Activated B cell treated with CpG ODN at 0.5 μM for 24 hours (primary cell): ENCODE measurements at regions of chr3 and their contacts with region 1.

Region 1: GRCh38 chr3:71710906-71711494 is 14.2 kb downstream of the EIF4E3 start:
- DNase-seq: no peak
- ATAC-seq: peak; percentile 52
- H3K4me3 Mint-ChIP-seq: no peak overlapping the region
- H3K27ac Mint-ChIP-seq: no peak overlapping the region
- H3K4me1 Mint-ChIP-seq: no peaks in the 10 kb centered on the region
- H3K27me3 Mint-ChIP-seq: no peaks in the 10 kb centered on the region
- CTCF ChIP-seq: no peak

Region 2: GRCh38 chr3:71846185-71846584 is 135.2 kb after region 1 on chr3:
- CTCF ChIA-PET with region 1: no interaction called
- POLR2A ChIA-PET with region 1: no interaction called
- intact Hi-C with region 1: no loop called
- DNase-seq: no peak
- ATAC-seq: no peak
- H3K4me3 Mint-ChIP-seq: no peak overlapping the region
- H3K27ac Mint-ChIP-seq: no peak overlapping the region
- H3K4me1 Mint-ChIP-seq: no peaks in the 10 kb centered on the region
- H3K27me3 Mint-ChIP-seq: peaks cover 4% of the 10 kb centered on the region
- CTCF ChIP-seq: no peak

Region 3: GRCh38 chr3:71998995-71999673 is 288.1 kb after region 1 on chr3:
- CTCF ChIA-PET with region 1: no interaction called
- POLR2A ChIA-PET with region 1: no interaction called
- intact Hi-C with region 1: no loop called
- DNase-seq: no peak
- ATAC-seq: no peak
- H3K4me3 Mint-ChIP-seq: no peak overlapping the region
- H3K27ac Mint-ChIP-seq: no peak overlapping the region
- H3K4me1 Mint-ChIP-seq: no peaks in the 10 kb centered on the region
- H3K27me3 Mint-ChIP-seq: peaks cover 5% of the 10 kb centered on the region
- CTCF ChIP-seq: no peak

Region 4: DNA sequence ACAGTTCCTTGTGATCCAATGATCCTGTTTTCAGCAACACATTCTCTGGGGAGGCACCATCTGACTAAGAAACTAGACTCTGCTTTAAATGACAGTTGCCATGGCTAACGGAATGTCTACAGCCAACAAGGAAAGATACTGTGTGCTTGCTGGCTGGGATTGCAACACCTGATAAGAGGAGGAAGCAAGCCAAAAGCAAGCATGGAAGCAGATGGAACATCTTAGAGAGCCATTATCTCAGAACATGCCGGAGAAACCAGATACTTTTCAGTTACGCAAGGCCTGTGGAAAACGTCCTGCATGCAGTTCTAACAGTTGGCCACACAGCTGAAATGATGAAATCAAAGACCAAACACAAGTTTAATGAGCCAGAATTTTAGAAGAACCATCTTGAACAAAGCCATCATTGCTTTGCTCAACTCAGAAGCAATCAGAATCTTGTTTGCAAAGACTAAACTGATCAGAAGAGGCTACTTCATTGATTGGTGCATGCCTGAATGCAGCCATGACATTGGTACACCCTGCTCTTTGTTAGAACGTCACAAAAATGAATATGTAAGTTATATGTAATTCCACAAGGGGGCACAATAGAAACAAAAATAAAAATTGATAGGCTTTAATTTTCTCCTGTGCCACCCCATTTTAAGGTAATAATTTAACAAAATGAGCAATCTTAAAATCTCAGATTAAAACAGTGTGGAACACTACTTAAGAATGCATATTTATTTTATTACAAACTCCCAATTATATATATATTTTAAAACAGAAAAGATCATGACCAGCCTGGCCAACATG is 1227.7 kb after region 1 on chr3:
- CTCF ChIA-PET with region 1: interaction called, 3 read pairs
- POLR2A ChIA-PET with region 1: no interaction called
- intact Hi-C with region 1: loop called (anchors 1 kb)
- DNase-seq: no peak
- ATAC-seq: peak; percentile 81
- H3K4me3 Mint-ChIP-seq: no peak overlapping the region
- H3K27ac Mint-ChIP-seq: no peak overlapping the region
- H3K4me1 Mint-ChIP-seq: no peaks in the 10 kb centered on the region
- H3K27me3 Mint-ChIP-seq: peaks cover 4% of the 10 kb centered on the region
- CTCF ChIP-seq: no peak

Region 5: DNA sequence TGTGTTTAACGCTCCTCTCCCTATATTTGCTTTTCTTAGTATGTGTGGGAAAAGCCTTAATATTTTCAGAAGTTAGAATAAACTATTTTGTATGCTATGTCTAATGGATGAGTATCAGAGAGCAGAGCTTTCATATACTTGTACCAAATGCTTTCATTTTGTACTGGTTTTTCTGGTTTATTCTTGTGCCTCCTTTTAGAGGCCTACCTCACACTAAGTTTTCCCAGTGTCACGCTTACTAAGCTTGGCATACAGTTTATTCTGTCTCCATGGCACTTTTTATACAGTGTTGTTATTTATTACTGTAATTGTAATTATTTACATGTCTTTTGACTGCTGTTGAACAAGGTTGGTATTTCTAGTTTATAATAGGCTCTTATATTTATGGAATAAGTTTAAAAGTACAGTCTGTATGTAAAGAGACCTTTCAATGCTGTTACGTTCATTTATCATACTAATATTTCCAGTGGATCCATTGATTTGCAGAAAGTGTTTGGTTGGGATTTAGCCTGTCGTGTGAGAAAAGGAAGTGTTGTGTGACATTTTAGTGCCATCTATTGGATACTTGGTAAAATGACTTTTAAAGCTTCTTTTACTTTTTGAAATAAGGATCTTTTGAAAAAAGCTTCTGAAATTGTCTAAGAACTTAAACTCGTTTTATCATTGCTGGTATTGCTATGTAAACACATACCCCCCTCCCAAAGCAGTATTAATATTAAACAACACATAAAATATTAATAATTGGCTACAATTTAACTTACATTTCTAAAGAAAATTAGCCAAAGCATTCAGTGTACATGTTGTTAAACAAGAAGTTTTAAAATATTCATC is 1345.2 kb after region 1 on chr3:
- CTCF ChIA-PET with region 1: interaction called, 10 read pairs
- POLR2A ChIA-PET with region 1: no interaction called
- intact Hi-C with region 1: loop called (anchors 1 kb)
- DNase-seq: no peak
- ATAC-seq: no peak
- H3K4me3 Mint-ChIP-seq: no peak overlapping the region
- H3K27ac Mint-ChIP-seq: no peak overlapping the region
- H3K4me1 Mint-ChIP-seq: peaks cover 3% of the 10 kb centered on the region
- H3K27me3 Mint-ChIP-seq: no peaks in the 10 kb centered on the region
- CTCF ChIP-seq: no peak

Region 6: DNA sequence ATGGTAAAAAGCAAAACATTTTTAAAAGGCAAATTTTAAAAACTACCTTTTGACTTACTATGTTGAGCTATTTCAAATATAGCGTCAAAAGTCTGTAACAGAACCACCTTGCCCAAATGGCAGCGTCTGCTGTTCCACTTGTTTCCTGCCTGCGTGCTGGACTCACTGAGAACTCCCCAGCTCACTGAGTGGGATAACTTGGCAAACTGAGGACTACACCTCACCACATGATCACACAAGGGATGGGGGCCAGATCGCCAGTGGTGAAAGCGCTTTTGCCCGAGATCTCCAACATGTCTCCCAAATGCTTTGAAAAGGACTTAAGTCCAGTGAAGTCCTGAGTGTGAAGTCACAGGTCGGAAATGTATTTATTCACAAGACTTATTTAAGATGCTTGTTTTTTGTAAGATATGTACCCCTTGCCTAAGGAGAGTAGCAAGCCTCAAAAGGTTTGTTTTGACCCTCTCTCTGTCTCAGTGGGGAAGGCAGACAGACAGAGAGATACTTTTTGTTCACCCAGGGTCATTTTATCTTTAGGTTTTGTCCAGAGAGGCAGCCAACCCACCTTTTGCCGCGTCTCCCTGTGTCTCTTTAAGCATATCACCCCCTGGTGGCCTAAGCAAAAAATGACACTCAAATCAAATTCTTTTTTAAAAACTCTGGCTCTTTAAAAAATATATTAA is 1721.2 kb after region 1 on chr3:
- CTCF ChIA-PET with region 1: no interaction called
- POLR2A ChIA-PET with region 1: no interaction called
- intact Hi-C with region 1: loop called (anchors 2 kb)
- DNase-seq: no peak
- ATAC-seq: no peak
- H3K4me3 Mint-ChIP-seq: no peak overlapping the region
- H3K27ac Mint-ChIP-seq: no peak overlapping the region
- H3K4me1 Mint-ChIP-seq: no peaks in the 10 kb centered on the region
- H3K27me3 Mint-ChIP-seq: no peaks in the 10 kb centered on the region
- CTCF ChIP-seq: no peak